ENCODE measurements at regions of chr15 and their contacts with region 1.

Region 1: DNA sequence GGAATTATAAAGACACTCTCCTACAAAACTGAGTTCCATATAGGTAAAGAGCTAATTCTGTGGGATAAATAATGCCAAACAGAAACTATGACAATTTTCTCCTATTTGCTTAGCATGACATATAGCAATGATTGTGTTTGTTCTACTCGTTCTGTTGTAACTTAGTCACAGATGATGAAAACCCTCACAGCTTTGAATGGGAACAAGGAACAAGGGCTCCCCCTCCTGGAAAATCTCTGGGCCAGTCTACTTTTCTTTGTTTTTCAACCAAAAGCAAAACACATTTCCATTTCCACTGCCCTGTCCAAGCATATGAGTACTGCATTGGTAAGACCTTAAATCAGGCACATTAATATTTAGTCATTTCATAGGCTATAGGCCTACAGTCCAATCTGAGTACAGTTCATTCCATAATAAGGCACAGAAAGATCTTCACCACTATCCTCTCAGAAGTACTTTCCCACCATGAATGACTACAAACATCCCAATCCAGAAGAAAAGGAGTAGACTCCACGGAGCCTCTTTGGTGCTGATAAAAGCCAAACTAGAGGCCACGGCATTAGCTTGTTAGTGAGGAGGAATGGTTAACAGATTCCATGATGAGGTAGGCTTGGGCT is 67.1 kb downstream of the ATP8B4 start:
- DNase-seq: peak; percentile 87
- ATAC-seq: peak; percentile 97
- H3K4me3 ChIP-seq: no peak overlapping the region
- H3K27ac ChIP-seq: peak overlapping the region; percentile 89
- H3K4me1 ChIP-seq: peaks cover 20% of the 10 kb centered on the region
- H3K27me3 ChIP-seq: no peaks in the 10 kb centered on the region
- CTCF ChIP-seq: peak; percentile 89

Region 2: GRCh38 chr15:49370782-49371181 is 681.1 kb before region 1 on chr15:
- CTCF ChIA-PET with region 1: no interaction called
- POLR2A ChIA-PET with region 1: no interaction called
- intact Hi-C with region 1: loop called (anchors 2 kb)
- DNase-seq: peak; percentile 52
- ATAC-seq: peak; percentile 27; the same call in 1 of the 2 replicates
- H3K4me3 ChIP-seq: no peak overlapping the region
- H3K27ac ChIP-seq: no peak overlapping the region
- H3K4me1 ChIP-seq: no peaks in the 10 kb centered on the region
- H3K27me3 ChIP-seq: no peaks in the 10 kb centered on the region
- CTCF ChIP-seq: peak; percentile 58

Region 3: GRCh38 chr15:49492824-49493223 is 559.1 kb before region 1 on chr15:
- CTCF ChIA-PET with region 1: no interaction called
- POLR2A ChIA-PET with region 1: no interaction called
- intact Hi-C with region 1: loop called (anchors 5 kb)
- DNase-seq: peak; percentile 31
- ATAC-seq: no peak
- H3K4me3 ChIP-seq: no peak overlapping the region
- H3K27ac ChIP-seq: no peak overlapping the region
- H3K4me1 ChIP-seq: peaks cover 34% of the 10 kb centered on the region
- H3K27me3 ChIP-seq: no peaks in the 10 kb centered on the region
- CTCF ChIP-seq: no peak

Region 4: GRCh38 chr15:49901996-49902684 is 149.8 kb before region 1 on chr15:
- CTCF ChIA-PET with region 1: interaction called, 5 read pairs
- POLR2A ChIA-PET with region 1: no interaction called
- intact Hi-C with region 1: loop called (anchors 1 kb)
- DNase-seq: peak; percentile 22
- ATAC-seq: peak; percentile 37
- H3K4me3 ChIP-seq: no peak overlapping the region
- H3K27ac ChIP-seq: peak overlapping the region; percentile 53
- H3K4me1 ChIP-seq: peaks cover 27% of the 10 kb centered on the region
- H3K27me3 ChIP-seq: no peaks in the 10 kb centered on the region
- CTCF ChIP-seq: peak; percentile 65; the same call in 1 of the 2 replicates

Region 5: GRCh38 chr15:50134520-50135024 is 82.7 kb after region 1 on chr15:
- CTCF ChIA-PET with region 1: no interaction called
- POLR2A ChIA-PET with region 1: no interaction called
- intact Hi-C with region 1: loop called (anchors 5 kb)
- DNase-seq: peak; percentile 74
- ATAC-seq: peak; percentile 71
- H3K4me3 ChIP-seq: no peak overlapping the region; the same call in 1 of the 2 replicates
- H3K27ac ChIP-seq: peak overlapping the region; percentile 91
- H3K4me1 ChIP-seq: peaks cover 31% of the 10 kb centered on the region
- H3K27me3 ChIP-seq: no peaks in the 10 kb centered on the region
- CTCF ChIP-seq: no peak

Measured in PC-3 (cell line).